ENCODE measurements at regions of chr10 and their contacts with region 1.

Region 1: DNA sequence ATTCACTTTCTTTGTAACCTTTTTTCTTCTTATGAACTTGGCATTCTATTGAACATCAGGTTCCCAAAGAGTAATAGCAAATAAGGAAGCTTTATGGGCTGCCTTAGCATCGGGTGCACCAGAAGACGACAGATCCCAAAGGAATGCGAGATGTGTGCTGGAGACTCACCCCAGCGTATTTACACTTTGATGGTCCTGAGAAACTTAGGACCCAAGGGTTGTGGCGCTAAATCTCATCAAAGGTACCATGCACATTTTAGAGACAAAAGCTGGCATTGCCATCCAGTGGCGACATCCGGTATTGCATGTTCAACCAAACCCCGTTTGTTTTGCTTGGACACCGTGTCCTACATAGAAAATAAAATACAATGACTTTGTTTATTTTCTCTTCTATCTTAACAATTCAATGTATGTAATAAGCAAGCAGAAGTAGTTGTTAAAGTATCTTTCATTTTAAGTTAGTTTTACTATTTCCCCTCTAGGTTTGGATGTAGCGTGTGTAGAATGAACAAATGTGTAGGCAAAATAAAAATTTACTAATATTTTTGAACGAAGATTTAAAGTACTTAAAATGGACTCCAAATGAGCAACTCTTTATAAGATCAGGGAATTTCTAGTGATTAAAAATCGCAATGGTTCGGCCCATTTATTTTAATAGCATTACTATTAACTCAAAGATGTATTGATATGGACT is 1154.8 kb downstream of the GATA3 start:
- DNase-seq: peak; percentile 36 to 73 (median 61)
- ATAC-seq: peak in 1 of 2 donors; percentile 20
- H3K4me3 ChIP-seq: no peak overlapping the region
- H3K27ac ChIP-seq: no peak overlapping the region
- H3K4me1 ChIP-seq: no peaks in the 10 kb centered on the region
- H3K27me3 ChIP-seq: peaks cover 2% of the 10 kb centered on the region

Region 2: GRCh38 chr10:7866176-7866575 is 1343.1 kb before region 1 on chr10:
- intact Hi-C with region 1: loop called (anchors 5 to 10 kb)
- DNase-seq: no peak
- ATAC-seq: no peak
- H3K4me3 ChIP-seq: no peak overlapping the region
- H3K27ac ChIP-seq: no peak overlapping the region
- H3K4me1 ChIP-seq: no peaks in the 10 kb centered on the region
- H3K27me3 ChIP-seq: no peaks in the 10 kb centered on the region

Region 3: GRCh38 chr10:7872041-7872442 is 1337.2 kb before region 1 on chr10:
- intact Hi-C with region 1: loop called (anchors 5 to 10 kb)
- DNase-seq: no peak
- ATAC-seq: no peak
- H3K4me3 ChIP-seq: peak overlapping the region; percentile 87
- H3K27ac ChIP-seq: no peak overlapping the region
- H3K4me1 ChIP-seq: no peaks in the 10 kb centered on the region
- H3K27me3 ChIP-seq: no peaks in the 10 kb centered on the region